ENCODE measurements at regions of chr21 and their contacts with region 1.

Region 1: DNA sequence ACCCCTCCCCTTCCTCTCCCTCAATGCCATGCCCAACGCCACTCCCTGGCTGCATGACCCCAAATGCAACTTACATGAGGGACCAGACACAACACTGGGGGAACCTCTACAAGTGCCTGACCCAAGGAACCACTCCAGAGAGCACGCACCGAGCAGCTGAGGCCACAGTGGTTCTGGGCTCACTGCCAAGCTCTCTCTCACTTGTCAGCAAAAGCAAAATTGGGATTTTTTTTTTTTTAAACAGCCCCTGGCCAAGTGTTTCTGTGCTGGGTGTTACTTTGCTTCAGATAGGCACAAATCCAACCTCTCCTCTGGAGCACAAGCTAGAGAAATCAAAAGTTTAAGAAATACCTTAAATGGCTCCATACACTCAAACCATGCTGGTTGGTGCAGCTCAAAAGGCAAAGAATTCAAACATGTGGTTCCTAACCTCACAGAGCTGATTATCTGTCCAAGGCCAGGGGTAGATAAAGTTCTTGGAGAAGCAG is 363.0 kb downstream of the SETD4 start:
- DNase-seq: no peak
- H3K4me3 ChIP-seq: no peak overlapping the region
- H3K27ac ChIP-seq: no peak overlapping the region
- H3K27me3 ChIP-seq: peaks cover 3% of the 10 kb centered on the region
- CTCF ChIP-seq: no peak

Region 2: GRCh38 chr21:35720208-35720731 is 22.9 kb after region 1 on chr21:
- CTCF ChIA-PET with region 1: no interaction called
- POLR2A ChIA-PET with region 1: interaction called, 11 read pairs
- DNase-seq: no peak
- H3K4me3 ChIP-seq: no peak overlapping the region
- H3K27ac ChIP-seq: no peak overlapping the region
- H3K27me3 ChIP-seq: no peaks in the 10 kb centered on the region
- CTCF ChIP-seq: no peak

Measured in AG04450 (cell line).